Transverse colon (tissue), 4 donors: ENCODE measurements at regions of chr14 and their contacts with region 1.

Region 1: GRCh38 chr14:101559624-101560533 is 1.4 kb upstream of the DIO3 start:
- DNase-seq: peak; percentile 48
- H3K4me3 ChIP-seq: peak overlapping the region; percentile 37 to 59 (median 48)
- H3K27ac ChIP-seq: peak overlapping the region; percentile 25 to 70 (median 58)
- H3K4me1 ChIP-seq: peaks cover 0 to 15% (median 10%) of the 10 kb centered on the region in 4 donors
- H3K27me3 ChIP-seq: peaks cover 69% of the 10 kb centered on the region
- CTCF ChIP-seq: peak; percentile 15 to 37 (median 19)
- EP300 ChIP-seq: no peak
- POLR2A ChIP-seq: no peak

Region 2: GRCh38 chr14:101183376-101184103 is 376.3 kb before region 1 on chr14:
- in situ Hi-C with region 1: no loop called
- intact Hi-C with region 1: loop called (anchors 10 kb)
- DNase-seq: no peak
- H3K4me3 ChIP-seq: no peak overlapping the region
- H3K27ac ChIP-seq: no peak overlapping the region
- H3K4me1 ChIP-seq: no peaks in the 10 kb centered on the region
- H3K27me3 ChIP-seq: no peaks in the 10 kb centered on the region
- CTCF ChIP-seq: peak; percentile 40 to 46 (median 43)
- EP300 ChIP-seq: no peak
- POLR2A ChIP-seq: no peak

Region 3: DNA sequence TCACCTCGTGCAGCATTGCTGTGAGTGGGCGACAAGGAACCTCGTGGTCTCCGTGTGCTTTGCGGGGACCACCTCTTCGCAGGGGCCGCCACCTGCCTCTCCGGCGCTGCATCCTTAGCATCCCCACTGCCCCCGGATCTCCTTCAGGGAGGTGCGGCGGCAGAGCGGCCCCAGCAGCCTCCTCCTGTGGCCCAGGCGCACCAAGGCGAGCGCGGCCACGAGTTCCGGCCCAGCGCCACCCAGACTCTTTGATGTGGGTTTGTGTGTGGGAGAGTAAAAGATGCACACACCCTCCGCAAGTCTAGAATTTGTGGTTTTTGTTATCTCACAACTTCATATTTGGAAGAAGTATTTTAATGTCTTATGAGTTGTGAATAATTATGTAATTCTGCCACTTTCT is 117.4 kb before region 1 on chr14:
- in situ Hi-C with region 1: no loop called
- intact Hi-C with region 1: no loop called
- DNase-seq: no peak
- H3K4me3 ChIP-seq: no peak overlapping the region
- H3K27ac ChIP-seq: no peak overlapping the region
- H3K4me1 ChIP-seq: no peaks in the 10 kb centered on the region
- H3K27me3 ChIP-seq: peaks cover 20% of the 10 kb centered on the region
- CTCF ChIP-seq: no peak
- EP300 ChIP-seq: no peak
- POLR2A ChIP-seq: no peak